HepG2 (cell line): ENCODE measurements at regions of chr3 and their contacts with region 1.

Region 1: DNA sequence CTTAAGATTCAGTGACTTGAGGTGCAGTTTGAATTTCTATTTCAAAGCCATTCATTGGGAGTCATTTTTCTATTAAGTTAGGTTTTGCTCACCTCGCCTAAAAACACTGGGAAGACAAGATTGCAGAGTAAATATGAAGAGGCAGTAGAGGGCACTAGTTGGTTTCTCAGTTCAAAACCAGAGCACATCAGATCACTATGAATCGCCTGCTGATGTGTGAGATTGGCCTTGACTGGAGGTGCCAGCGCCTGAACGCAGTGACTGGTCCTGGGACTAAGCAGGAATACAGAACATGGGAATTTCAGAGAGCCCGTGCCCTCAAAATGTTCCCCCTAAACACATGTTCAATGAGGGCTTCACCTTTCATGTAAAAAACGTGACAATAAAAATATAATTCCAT is 229.0 kb downstream of the ITPR1 start:
- DNase-seq: peak; percentile 56
- ATAC-seq: peak; percentile 76
- H3K4me3 ChIP-seq: no peak overlapping the region
- H3K27ac ChIP-seq: no peak overlapping the region
- H3K4me1 ChIP-seq: peaks cover 36% of the 10 kb centered on the region
- H3K27me3 ChIP-seq: no peaks in the 10 kb centered on the region
- CTCF ChIP-seq: peak; percentile 77
- EP300 ChIP-seq: no peak
- POLR2A ChIP-seq: no peak
- RAD21 ChIP-seq: peak; percentile 44; the same call in 1 of the 2 replicates

Region 2: DNA sequence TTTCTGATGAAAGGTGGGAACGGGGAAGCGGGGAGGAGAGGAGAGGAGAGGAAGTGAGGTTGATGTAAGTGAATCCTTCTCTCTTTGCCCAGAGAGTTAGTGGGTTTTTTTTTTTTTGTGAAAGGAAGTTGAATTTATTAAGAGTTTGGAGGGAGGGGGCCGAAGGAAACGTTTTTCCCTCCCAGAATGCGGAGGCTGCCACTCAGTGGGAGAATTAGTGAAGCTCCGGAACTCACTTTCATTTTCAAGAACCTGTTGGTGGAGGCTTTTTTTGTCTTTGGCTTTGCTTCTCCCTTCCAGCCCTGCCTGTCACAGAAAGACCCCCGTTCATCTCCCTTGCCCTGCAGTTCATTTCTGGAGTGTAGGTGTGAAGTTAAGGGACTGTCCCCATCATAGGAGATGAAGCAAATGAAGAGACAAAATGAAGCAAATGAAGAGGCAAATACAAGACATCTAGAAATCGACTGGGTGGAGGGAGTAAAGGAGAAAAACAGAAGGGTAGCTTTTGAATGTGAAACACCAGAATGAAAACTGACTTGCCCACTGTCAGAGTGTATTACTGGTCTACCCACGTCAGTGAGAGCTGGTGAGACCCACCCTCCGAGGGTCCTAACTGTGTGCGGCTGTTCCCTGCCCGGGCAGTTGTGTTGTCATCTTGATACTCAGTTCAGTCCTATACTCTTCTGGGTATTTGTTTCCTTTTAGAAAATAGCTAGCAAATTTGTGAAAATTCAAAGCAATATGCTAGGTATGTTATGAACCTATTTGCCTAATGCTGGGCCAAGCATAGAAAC is 137.4 kb before region 1 on chr3:
- CTCF ChIA-PET with region 1: no interaction called
- POLR2A ChIA-PET with region 1: no interaction called
- in situ Hi-C with region 1: no loop called
- intact Hi-C with region 1: no loop called
- DNase-seq: no peak
- ATAC-seq: no peak
- H3K4me3 ChIP-seq: no peak overlapping the region
- H3K27ac ChIP-seq: no peak overlapping the region
- H3K4me1 ChIP-seq: no peaks in the 10 kb centered on the region
- H3K27me3 ChIP-seq: no peaks in the 10 kb centered on the region
- CTCF ChIP-seq: no peak
- EP300 ChIP-seq: no peak
- POLR2A ChIP-seq: no peak
- RAD21 ChIP-seq: no peak

Region 3: GRCh38 chr3:4780545-4780957 is 58.4 kb after region 1 on chr3:
- CTCF ChIA-PET with region 1: interaction called, 4 read pairs
- POLR2A ChIA-PET with region 1: no interaction called
- in situ Hi-C with region 1: no loop called
- intact Hi-C with region 1: loop called (anchors 2 kb)
- DNase-seq: peak; percentile 51
- ATAC-seq: peak; percentile 87
- H3K4me3 ChIP-seq: no peak overlapping the region
- H3K27ac ChIP-seq: peak overlapping the region; percentile 31
- H3K4me1 ChIP-seq: peaks cover 15% of the 10 kb centered on the region
- H3K27me3 ChIP-seq: no peaks in the 10 kb centered on the region
- CTCF ChIP-seq: peak; percentile 34; the same call in 1 of the 2 replicates
- EP300 ChIP-seq: peak in 1 of 2 experiments; percentile 67; a peak in 1 of 4 replicates
- POLR2A ChIP-seq: no peak
- RAD21 ChIP-seq: no peak

Region 4: GRCh38 chr3:4834403-4834866 is 112.3 kb after region 1 on chr3:
- CTCF ChIA-PET with region 1: no interaction called
- POLR2A ChIA-PET with region 1: no interaction called
- in situ Hi-C with region 1: no loop called
- intact Hi-C with region 1: no loop called
- DNase-seq: no peak
- ATAC-seq: no peak
- H3K4me3 ChIP-seq: no peak overlapping the region
- H3K27ac ChIP-seq: no peak overlapping the region
- H3K4me1 ChIP-seq: no peaks in the 10 kb centered on the region
- H3K27me3 ChIP-seq: no peaks in the 10 kb centered on the region
- CTCF ChIP-seq: no peak
- EP300 ChIP-seq: no peak
- POLR2A ChIP-seq: no peak
- RAD21 ChIP-seq: no peak